ENCODE measurements at regions of chr17 and their contacts with region 1.

Region 1: DNA sequence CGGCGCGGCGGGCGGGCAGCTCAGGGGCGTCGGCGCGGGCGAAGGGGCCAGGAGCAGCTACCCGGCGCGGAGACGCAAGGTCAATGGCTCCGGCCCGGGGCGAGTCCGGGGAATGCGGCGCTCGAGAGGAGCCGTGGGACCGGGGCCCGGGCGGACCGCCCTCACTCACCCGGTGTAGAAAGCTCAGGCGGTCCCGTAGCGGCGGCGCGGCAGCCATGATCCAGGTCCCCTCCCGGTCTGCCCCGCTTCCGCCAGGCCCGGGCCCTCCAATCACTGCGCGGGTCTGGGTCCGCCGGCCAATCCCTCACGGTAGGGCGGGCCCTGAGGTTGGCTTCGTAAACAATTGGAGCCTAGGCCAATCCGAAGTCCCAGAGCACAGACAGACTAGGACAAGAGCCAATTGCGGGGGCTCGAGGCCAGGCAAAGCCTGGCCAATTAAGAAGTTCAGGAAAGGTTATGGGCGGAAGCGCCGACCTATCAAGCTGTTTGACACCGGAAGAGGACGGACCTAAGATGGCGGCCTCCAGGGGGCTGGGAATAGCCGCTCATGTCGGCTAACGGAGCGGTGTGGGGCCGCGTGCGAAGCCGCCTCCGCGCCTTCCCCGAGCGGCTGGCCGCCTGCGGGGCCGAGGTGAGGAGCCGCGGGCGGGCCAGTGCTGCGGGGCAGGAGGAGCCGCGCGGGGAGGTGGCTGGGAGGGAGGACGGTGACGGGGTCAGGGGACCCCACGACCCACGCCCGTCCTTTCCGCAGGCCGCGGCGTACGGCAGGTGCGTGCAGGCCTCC is at the starts of genes NDUFAF8 and TEPSIN:
- DNase-seq: peak; percentile 86
- ATAC-seq: peak; percentile 95
- H3K4me3 Mint-ChIP-seq: peak within 1 kb of the TSS; percentile 93
- H3K27ac Mint-ChIP-seq: peak within 1 kb of the TSS; percentile 88
- H3K4me1 Mint-ChIP-seq: peaks cover 47% of the 10 kb centered on the region
- H3K27me3 Mint-ChIP-seq: no peaks in the 10 kb centered on the region
- CTCF ChIP-seq: no peak
- total RNA-seq, gene NDUFAF8: 52.8 and 55.8 TPM in 2 replicates
- total RNA-seq, gene TEPSIN: 82.9 and 102 TPM in 2 replicates

Region 2: GRCh38 chr17:80263253-80264204 is 975.5 kb before region 1 on chr17:
- CTCF ChIA-PET with region 1: no interaction called
- POLR2A ChIA-PET with region 1: interaction called, 3 read pairs
- intact Hi-C with region 1: loop called (anchors 5 kb)
- DNase-seq: peak; percentile 73
- ATAC-seq: peak; percentile 64
- H3K4me3 Mint-ChIP-seq: peak overlapping the region; percentile 93
- H3K27ac Mint-ChIP-seq: peak overlapping the region; percentile 90
- H3K4me1 Mint-ChIP-seq: peaks cover 64% of the 10 kb centered on the region
- H3K27me3 Mint-ChIP-seq: no peaks in the 10 kb centered on the region
- CTCF ChIP-seq: no peak

Region 3: GRCh38 chr17:81034779-81035388 is 204.1 kb before region 1 on chr17 and contains the start of gene BAIAP2:
- CTCF ChIA-PET with region 1: no interaction called
- POLR2A ChIA-PET with region 1: no interaction called
- intact Hi-C with region 1: loop called (anchors 2 kb)
- DNase-seq: peak; percentile 91
- ATAC-seq: peak; percentile 88
- H3K4me3 Mint-ChIP-seq: peak within 1 kb of the TSS; percentile 88
- H3K27ac Mint-ChIP-seq: peak within 1 kb of the TSS; percentile 69
- H3K4me1 Mint-ChIP-seq: peaks cover 12% of the 10 kb centered on the region
- H3K27me3 Mint-ChIP-seq: peaks cover 40% of the 10 kb centered on the region
- CTCF ChIP-seq: no peak
- total RNA-seq, gene BAIAP2: 5.3 and 6.8 TPM in 2 replicates

Region 4: DNA sequence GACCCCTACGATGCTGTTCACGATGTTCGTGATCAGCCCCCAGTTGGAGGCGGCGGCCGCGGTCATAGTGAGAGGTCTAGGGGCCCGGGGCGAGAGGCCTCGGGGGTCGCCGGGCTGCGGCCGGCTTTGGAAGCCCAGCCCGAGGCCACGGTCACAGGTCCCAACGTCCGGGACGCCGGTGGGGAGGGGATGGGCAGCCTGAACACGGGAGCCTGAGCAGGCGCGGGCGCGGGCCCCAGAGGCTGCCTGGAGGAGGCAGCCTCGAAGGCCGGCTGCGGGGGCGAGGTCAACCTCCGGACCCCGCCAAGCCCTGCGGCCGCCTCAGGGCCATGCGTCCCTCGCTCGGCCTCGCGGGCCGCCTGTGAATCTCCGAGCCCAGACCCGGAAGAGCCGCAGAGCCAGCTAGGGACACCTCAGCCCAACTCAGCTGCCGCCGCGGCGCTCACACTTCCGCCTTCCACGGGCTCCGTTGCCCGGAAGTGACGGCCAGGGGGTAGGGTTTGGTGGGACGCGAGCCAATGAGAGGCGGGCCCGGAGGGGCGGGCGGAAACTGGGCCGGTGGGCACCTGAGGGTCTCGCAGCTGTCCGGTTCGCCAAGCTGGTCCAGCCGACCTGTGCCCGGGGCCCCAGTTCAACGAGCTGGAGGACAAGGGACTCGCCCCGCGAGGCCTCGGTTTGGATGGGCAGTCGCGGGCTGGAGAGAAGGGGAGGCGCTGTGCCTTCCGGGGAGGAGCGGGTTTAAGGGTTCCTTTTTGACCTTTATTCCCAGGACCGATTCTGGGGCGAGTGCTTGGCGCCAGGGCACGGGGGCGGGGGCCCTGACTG is 56.1 kb after region 1 on chr17 and contains the start of gene SLC38A10:
- CTCF ChIA-PET with region 1: no interaction called
- POLR2A ChIA-PET with region 1: interaction called, 11 read pairs
- intact Hi-C with region 1: no loop called
- DNase-seq: peak; percentile 92
- ATAC-seq: peak; percentile 86
- H3K4me3 Mint-ChIP-seq: peak within 1 kb of the TSS; percentile 95
- H3K27ac Mint-ChIP-seq: peak within 1 kb of the TSS; percentile 92
- H3K4me1 Mint-ChIP-seq: peaks cover 39% of the 10 kb centered on the region
- H3K27me3 Mint-ChIP-seq: no peaks in the 10 kb centered on the region
- CTCF ChIP-seq: no peak
- total RNA-seq, gene SLC38A10: 75.9 and 97.1 TPM in 2 replicates

Region 5: DNA sequence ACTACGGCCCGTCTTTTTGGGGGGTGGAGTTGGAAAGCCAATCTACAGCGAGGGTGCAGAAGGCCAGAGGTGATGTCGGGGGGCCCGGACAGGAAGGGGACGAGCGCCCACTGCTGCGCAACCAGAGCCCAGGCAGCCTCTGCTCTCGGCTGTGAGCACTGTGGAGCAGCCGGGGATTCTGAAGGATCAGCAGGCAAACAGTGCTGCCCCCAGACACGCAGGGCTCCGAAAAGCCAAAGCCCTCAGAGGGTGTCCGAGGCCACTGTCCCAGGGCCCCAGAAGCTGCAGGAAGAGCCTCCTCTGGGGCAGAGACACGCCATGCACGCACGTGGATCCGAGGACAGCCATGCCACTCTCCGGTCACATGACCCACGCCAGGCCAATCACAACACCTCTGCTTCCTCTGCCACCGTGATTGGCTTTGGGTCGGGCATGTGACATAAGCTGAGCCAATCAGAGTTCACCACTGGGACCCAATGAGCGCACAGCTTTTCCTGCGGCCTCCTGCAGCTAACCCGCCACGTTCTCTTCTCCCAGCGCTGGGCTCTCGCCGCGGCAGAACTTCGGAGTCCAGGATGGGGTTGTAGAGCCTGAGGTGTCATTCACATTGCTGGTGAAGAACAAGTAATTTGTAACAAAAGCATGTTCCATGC is 232.9 kb after region 1 on chr17:
- CTCF ChIA-PET with region 1: no interaction called
- POLR2A ChIA-PET with region 1: no interaction called
- intact Hi-C with region 1: no loop called
- DNase-seq: no peak
- ATAC-seq: no peak
- H3K4me3 Mint-ChIP-seq: no peak overlapping the region
- H3K27ac Mint-ChIP-seq: no peak overlapping the region
- H3K4me1 Mint-ChIP-seq: no peaks in the 10 kb centered on the region
- H3K27me3 Mint-ChIP-seq: no peaks in the 10 kb centered on the region
- CTCF ChIP-seq: no peak

Region 6: DNA sequence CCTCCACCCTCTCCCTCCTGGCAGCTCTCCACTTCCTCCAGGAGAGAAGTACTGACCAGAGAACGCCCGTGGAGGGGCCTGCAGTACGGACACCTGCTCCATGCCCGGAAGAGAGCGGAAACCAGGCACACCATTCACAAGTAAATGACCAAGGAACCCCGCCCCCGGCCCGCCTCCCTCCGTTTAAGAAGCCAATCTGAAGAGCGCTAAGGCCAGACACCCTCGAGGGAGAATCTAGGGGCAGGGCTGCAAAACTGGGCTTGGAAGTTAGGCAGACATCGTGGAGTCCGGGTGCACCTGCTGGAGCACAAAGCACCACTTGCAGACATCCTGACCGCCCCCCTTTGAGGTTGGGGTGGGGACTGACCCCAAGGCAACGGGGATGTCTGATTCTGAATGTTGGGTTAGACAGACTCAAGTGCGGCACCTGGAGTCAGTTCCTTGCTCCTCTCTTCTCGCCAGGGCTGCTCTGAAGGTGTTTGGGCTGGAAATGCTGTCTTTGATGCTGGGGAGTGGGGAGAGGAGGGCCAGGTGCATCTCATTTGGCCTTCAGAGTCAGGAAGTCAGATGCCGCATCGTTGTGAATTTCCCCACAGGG is 314.1 kb after region 1 on chr17:
- CTCF ChIA-PET with region 1: no interaction called
- POLR2A ChIA-PET with region 1: interaction called, 10 read pairs
- intact Hi-C with region 1: no loop called
- DNase-seq: no peak
- ATAC-seq: peak; percentile 71
- H3K4me3 Mint-ChIP-seq: peak overlapping the region; percentile 91
- H3K27ac Mint-ChIP-seq: peak overlapping the region; percentile 92
- H3K4me1 Mint-ChIP-seq: peaks cover 45% of the 10 kb centered on the region
- H3K27me3 Mint-ChIP-seq: no peaks in the 10 kb centered on the region
- CTCF ChIP-seq: no peak

Measured in activated B cell treated with CpG ODN at 0.5 μM for 24 hours (primary cell).